ENCODE measurements at regions of chr11 and their contacts with region 1.

Region 1: GRCh38 chr11:67630228-67630942 is 648 bp upstream of the NUDT8 start:
- DNase-seq: peak in 8 of 9 experiments; percentile 88 to 97 (median 94)
- ATAC-seq: peak; percentile 36
- H3K4me3 ChIP-seq: peak overlapping the region; percentile 89 to 90
- H3K4me3 Mint-ChIP-seq: peak overlapping the region; percentile 87
- H3K27ac ChIP-seq: peak overlapping the region; percentile 71 to 90
- H3K27ac Mint-ChIP-seq: peak overlapping the region; percentile 79
- H3K4me1 ChIP-seq: peaks cover 9% of the 10 kb centered on the region
- H3K4me1 Mint-ChIP-seq: peaks cover 8% of the 10 kb centered on the region
- H3K27me3 ChIP-seq: no peaks in the 10 kb centered on the region
- H3K27me3 Mint-ChIP-seq: no peaks in the 10 kb centered on the region
- CTCF ChIP-seq: peak; percentile 86

Region 2: DNA sequence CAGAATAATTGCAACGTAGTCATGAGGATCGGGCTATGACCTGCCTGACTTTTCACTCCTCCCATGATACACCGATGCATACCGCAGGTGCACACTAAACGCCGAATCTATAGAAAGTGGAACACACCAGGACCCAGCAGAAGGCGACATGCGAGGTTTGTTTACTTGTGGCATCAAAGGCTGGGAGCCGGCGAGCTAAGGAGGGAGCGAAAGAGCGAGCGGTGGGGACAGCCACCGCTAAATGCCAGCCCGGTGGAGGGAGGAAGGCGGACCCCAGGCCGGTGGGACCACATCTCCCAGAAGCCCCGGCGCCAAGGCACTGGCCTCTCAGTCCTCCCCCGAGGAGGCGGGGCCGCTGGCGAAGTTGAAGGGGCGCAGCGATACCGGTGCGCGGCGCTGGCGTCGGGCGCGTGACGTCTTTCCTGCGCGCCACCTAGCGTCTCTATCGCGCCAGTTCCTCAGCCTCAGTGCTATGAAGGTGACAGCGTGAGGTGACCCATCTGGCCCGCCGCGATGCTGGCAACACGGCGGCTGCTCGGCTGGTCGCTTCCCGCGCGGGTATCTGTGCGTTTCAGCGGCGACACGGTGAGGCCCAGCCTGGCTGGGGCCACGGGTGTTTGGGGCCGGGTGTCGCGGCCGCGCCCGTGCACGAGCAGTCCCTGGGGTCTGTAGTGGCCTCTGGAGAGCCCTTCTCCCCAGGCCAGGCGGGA is 23.7 kb before region 1 on chr11 and contains the start of gene NDUFV1:
- CTCF ChIA-PET with region 1: interaction called, 79 read pairs
- POLR2A ChIA-PET with region 1: interaction called, 6 read pairs
- intact Hi-C with region 1: loop called (anchors 1 kb)
- DNase-seq: peak; percentile 92 to 98 (median 96)
- ATAC-seq: peak; percentile 99
- H3K4me3 ChIP-seq: peak within 1 kb of the TSS; percentile 69
- H3K4me3 Mint-ChIP-seq: peak within 1 kb of the TSS; percentile 91
- H3K27ac ChIP-seq: peak within 1 kb of the TSS; percentile 69 to 71
- H3K27ac Mint-ChIP-seq: peak within 1 kb of the TSS; percentile 89
- H3K4me1 ChIP-seq: peaks cover 21% of the 10 kb centered on the region
- H3K4me1 Mint-ChIP-seq: peaks cover 20% of the 10 kb centered on the region
- H3K27me3 ChIP-seq: no peaks in the 10 kb centered on the region
- H3K27me3 Mint-ChIP-seq: peaks cover 8% of the 10 kb centered on the region
- CTCF ChIP-seq: peak; percentile 59
- total RNA-seq, gene NDUFV1: 220 to 237 TPM

Region 3: GRCh38 chr11:67613960-67614715 is 16.2 kb before region 1 on chr11:
- CTCF ChIA-PET with region 1: interaction called, 79 read pairs
- POLR2A ChIA-PET with region 1: interaction called, 27 read pairs
- intact Hi-C with region 1: loop called (anchors 1 kb)
- DNase-seq: peak; percentile 62 to 96 (median 86)
- ATAC-seq: peak; percentile 91
- H3K4me3 ChIP-seq: peak overlapping the region; percentile 55 to 61
- H3K4me3 Mint-ChIP-seq: peak overlapping the region; percentile 82
- H3K27ac ChIP-seq: peak overlapping the region; percentile 84 to 99
- H3K27ac Mint-ChIP-seq: peak overlapping the region; percentile 98
- H3K4me1 ChIP-seq: peaks cover 35% of the 10 kb centered on the region
- H3K4me1 Mint-ChIP-seq: peaks cover 29% of the 10 kb centered on the region
- H3K27me3 ChIP-seq: no peaks in the 10 kb centered on the region
- H3K27me3 Mint-ChIP-seq: no peaks in the 10 kb centered on the region
- CTCF ChIP-seq: peak; percentile 56

Region 4: GRCh38 chr11:67648140-67649123 is 18.0 kb after region 1 on chr11:
- CTCF ChIA-PET with region 1: interaction called, 10 read pairs
- POLR2A ChIA-PET with region 1: interaction called, 7 read pairs
- intact Hi-C with region 1: loop called in 1 of 2 experiments (anchors 2 kb)
- DNase-seq: peak in 7 of 9 experiments; percentile 37 to 74 (median 66)
- ATAC-seq: peak; percentile 88
- H3K4me3 ChIP-seq: no peak overlapping the region
- H3K4me3 Mint-ChIP-seq: peak overlapping the region; percentile 45
- H3K27ac ChIP-seq: peak overlapping the region in 1 of 2 experiments; percentile 14
- H3K27ac Mint-ChIP-seq: no peak overlapping the region
- H3K4me1 ChIP-seq: peaks cover 46% of the 10 kb centered on the region
- H3K4me1 Mint-ChIP-seq: peaks cover 41% of the 10 kb centered on the region
- H3K27me3 ChIP-seq: no peaks in the 10 kb centered on the region
- H3K27me3 Mint-ChIP-seq: no peaks in the 10 kb centered on the region
- CTCF ChIP-seq: peak; percentile 37

Region 5: GRCh38 chr11:67656278-67656922 is 26.0 kb after region 1 on chr11:
- CTCF ChIA-PET with region 1: interaction called, 126 read pairs
- POLR2A ChIA-PET with region 1: interaction called, 9 read pairs
- intact Hi-C with region 1: loop called (anchors 1 kb)
- DNase-seq: no peak
- ATAC-seq: no peak
- H3K4me3 ChIP-seq: no peak overlapping the region
- H3K4me3 Mint-ChIP-seq: no peak overlapping the region
- H3K27ac ChIP-seq: no peak overlapping the region
- H3K27ac Mint-ChIP-seq: no peak overlapping the region
- H3K4me1 ChIP-seq: no peaks in the 10 kb centered on the region
- H3K4me1 Mint-ChIP-seq: no peaks in the 10 kb centered on the region
- H3K27me3 ChIP-seq: no peaks in the 10 kb centered on the region
- H3K27me3 Mint-ChIP-seq: no peaks in the 10 kb centered on the region
- CTCF ChIP-seq: no peak

Region 6: GRCh38 chr11:67705264-67705663 is 74.9 kb after region 1 on chr11:
- CTCF ChIA-PET with region 1: no interaction called
- POLR2A ChIA-PET with region 1: no interaction called
- intact Hi-C with region 1: loop called in 1 of 2 experiments (anchors 10 kb)
- DNase-seq: no peak
- ATAC-seq: no peak
- H3K4me3 ChIP-seq: no peak overlapping the region
- H3K4me3 Mint-ChIP-seq: no peak overlapping the region
- H3K27ac ChIP-seq: no peak overlapping the region
- H3K27ac Mint-ChIP-seq: no peak overlapping the region
- H3K4me1 ChIP-seq: no peaks in the 10 kb centered on the region
- H3K4me1 Mint-ChIP-seq: no peaks in the 10 kb centered on the region
- H3K27me3 ChIP-seq: no peaks in the 10 kb centered on the region
- H3K27me3 Mint-ChIP-seq: peaks cover 3% of the 10 kb centered on the region
- CTCF ChIP-seq: no peak